Astrocyte of the cerebellum (primary cell): ENCODE measurements at regions of chr2 and their contacts with region 1.

Region 1: DNA sequence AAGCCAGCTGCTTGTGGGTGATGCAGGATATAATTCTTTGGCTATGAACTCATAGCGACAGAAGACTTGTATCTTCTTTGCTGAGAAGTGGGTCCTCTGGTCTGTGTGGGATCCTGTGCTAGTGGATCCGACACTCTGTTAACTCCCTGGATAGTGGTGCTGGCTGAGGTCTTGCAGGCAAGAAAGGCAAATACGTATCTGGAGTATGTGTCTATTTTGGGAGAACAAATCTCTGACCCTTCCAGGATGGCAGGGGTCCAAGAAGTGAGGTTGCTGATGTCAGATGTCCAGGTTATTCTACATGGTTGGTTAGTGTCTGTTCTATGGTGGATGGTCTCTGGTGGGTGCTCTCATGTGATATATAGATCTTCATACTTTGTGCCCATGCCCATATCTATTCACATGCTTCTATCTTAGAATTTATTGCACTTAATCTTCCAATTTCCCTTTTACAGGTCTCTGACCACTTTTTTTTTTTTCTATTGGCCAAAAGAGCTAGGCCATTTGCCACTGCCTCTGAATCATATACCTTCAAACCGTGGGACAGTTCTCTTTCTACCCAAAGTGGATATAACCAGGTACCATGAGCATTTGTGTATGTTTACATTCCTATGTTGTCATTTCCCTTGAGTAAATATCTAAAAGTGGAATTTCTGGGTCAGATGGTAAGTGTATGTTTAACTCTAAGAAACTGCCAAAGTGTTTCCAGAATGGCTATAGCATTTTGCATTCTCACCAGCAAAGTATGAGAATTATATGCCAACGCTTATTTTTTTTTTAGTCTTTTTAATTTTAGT is 45.1 kb upstream of the RBMS1 start:
- DNase-seq: no peak
- H3K4me3 ChIP-seq: no peak overlapping the region
- CTCF ChIP-seq: no peak

Region 2: GRCh38 chr2:160472839-160473251 is 65.9 kb before region 1 on chr2:
- in situ Hi-C with region 1: no loop called
- DNase-seq: no peak
- H3K4me3 ChIP-seq: no peak overlapping the region
- CTCF ChIP-seq: no peak

Region 3: GRCh38 chr2:160582490-160583145 is 43.9 kb after region 1 on chr2:
- in situ Hi-C with region 1: loop called (anchors 5 kb)
- DNase-seq: peak; percentile 62
- H3K4me3 ChIP-seq: no peak overlapping the region
- CTCF ChIP-seq: no peak

Region 4: DNA sequence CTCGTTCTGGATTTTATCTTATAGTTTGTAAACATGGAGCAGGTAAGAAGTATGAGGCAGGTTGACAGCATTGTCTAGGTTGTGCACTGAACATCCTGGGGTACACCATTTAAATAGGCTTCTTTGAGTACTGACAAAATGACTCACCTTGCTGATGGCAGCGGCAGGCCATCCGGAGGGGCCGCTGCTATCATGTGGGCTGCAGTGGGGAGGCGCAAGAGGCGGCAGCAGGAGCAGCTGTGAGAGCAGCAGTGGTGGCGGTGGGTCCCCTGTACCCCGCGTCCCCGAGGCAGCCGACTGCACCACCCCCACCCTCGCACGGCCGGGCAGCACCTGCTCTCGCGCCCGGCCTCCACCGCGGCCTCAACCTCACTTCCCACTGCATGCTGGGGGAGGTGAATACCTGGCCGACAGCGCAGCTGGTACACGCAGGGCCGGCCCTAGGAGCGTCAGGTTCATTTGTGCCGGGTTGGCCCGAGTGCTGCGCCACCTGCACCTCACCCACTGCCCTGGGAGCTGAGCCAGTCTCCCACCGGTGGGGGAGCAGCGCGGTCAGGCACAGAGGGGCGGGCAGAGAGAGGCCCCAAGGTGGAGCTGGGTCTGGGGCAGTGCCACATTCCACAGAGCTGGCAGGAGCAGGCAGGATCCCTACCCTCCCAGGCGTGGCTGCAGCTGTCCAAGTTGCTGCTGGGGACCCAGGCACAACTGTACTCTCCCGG is 109.4 kb after region 1 on chr2:
- in situ Hi-C with region 1: no loop called
- DNase-seq: no peak
- H3K4me3 ChIP-seq: no peak overlapping the region
- CTCF ChIP-seq: no peak